ENCODE measurements at regions of chr13 and their contacts with region 1.

Region 1: GRCh38 chr13:53200498-53201453 is 172.2 kb downstream of the OLFM4 start:
- DNase-seq: peak; percentile 90
- ATAC-seq: peak; percentile 78
- H3K4me3 Mint-ChIP-seq: peak overlapping the region; percentile 55
- H3K27ac Mint-ChIP-seq: no peak overlapping the region
- H3K4me1 Mint-ChIP-seq: no peaks in the 10 kb centered on the region
- H3K27me3 Mint-ChIP-seq: peaks cover 62% of the 10 kb centered on the region
- CTCF ChIP-seq: peak; percentile 92

Region 2: GRCh38 chr13:52955472-52955874 is 245.3 kb before region 1 on chr13:
- CTCF ChIA-PET with region 1: interaction called, 10 read pairs
- POLR2A ChIA-PET with region 1: no interaction called
- DNase-seq: peak; percentile 53
- ATAC-seq: peak; percentile 88
- H3K4me3 Mint-ChIP-seq: peak overlapping the region; percentile 47
- H3K27ac Mint-ChIP-seq: peak overlapping the region; percentile 84
- H3K4me1 Mint-ChIP-seq: peaks cover 68% of the 10 kb centered on the region
- H3K27me3 Mint-ChIP-seq: peaks cover 41% of the 10 kb centered on the region
- CTCF ChIP-seq: no peak

Region 3: DNA sequence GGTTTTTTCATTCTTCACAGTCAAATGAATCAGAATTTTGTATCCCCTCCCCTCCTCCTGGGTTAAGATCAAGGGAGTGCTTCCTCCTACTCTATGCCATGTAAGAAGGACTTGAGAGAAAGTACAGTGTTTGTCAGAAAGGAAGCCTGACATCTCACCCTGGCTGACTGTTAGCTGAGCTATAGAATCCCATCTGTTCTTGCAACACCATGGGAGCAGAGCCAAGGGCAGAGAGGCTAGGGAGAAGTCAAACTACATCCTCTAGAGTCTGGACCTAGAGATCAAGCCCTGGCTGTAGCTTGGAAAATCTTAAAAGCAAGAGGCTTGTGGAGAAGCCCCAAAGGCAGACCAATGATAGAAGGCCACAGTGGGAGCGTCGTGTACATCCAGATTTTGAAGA is 26.2 kb before region 1 on chr13:
- CTCF ChIA-PET with region 1: interaction called, 10 read pairs
- POLR2A ChIA-PET with region 1: no interaction called
- DNase-seq: no peak
- ATAC-seq: no peak
- H3K4me3 Mint-ChIP-seq: no peak overlapping the region
- H3K27ac Mint-ChIP-seq: no peak overlapping the region
- H3K4me1 Mint-ChIP-seq: no peaks in the 10 kb centered on the region
- H3K27me3 Mint-ChIP-seq: no peaks in the 10 kb centered on the region
- CTCF ChIP-seq: no peak

Region 4: DNA sequence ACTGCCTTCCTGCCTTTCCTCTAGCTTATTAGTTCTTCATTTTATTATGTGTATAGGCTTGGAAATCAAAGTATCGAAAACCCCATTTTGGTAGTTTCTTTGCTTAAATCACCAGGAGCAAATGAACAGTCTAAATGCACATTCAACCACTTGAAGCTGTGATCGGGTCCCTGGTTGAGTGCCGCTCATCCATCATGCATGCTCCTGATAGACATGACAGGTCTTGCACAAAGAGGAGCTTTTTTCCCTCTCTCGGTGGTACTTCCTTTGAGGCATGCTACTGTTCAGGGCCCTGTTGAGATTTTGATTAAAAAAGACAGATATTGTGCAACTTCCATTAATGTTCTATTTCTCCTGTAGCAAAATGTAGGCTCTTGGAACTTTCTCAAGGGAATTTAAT is 13.7 kb after region 1 on chr13:
- CTCF ChIA-PET with region 1: interaction called, 20 read pairs
- POLR2A ChIA-PET with region 1: no interaction called
- DNase-seq: no peak
- ATAC-seq: no peak
- H3K4me3 Mint-ChIP-seq: no peak overlapping the region
- H3K27ac Mint-ChIP-seq: no peak overlapping the region
- H3K4me1 Mint-ChIP-seq: no peaks in the 10 kb centered on the region
- H3K27me3 Mint-ChIP-seq: peaks cover 18% of the 10 kb centered on the region
- CTCF ChIP-seq: no peak

Region 5: GRCh38 chr13:53276265-53276664 is 75.5 kb after region 1 on chr13:
- CTCF ChIA-PET with region 1: no interaction called
- POLR2A ChIA-PET with region 1: no interaction called
- DNase-seq: no peak
- ATAC-seq: peak; percentile 94
- H3K4me3 Mint-ChIP-seq: peak overlapping the region; percentile 2; the same call in 1 of the 2 replicates
- H3K27ac Mint-ChIP-seq: no peak overlapping the region
- H3K4me1 Mint-ChIP-seq: peaks cover 16% of the 10 kb centered on the region
- H3K27me3 Mint-ChIP-seq: peaks cover 100% of the 10 kb centered on the region
- CTCF ChIP-seq: no peak